ENCODE measurements at regions of chr22 and their contacts with region 1.

Region 1: DNA sequence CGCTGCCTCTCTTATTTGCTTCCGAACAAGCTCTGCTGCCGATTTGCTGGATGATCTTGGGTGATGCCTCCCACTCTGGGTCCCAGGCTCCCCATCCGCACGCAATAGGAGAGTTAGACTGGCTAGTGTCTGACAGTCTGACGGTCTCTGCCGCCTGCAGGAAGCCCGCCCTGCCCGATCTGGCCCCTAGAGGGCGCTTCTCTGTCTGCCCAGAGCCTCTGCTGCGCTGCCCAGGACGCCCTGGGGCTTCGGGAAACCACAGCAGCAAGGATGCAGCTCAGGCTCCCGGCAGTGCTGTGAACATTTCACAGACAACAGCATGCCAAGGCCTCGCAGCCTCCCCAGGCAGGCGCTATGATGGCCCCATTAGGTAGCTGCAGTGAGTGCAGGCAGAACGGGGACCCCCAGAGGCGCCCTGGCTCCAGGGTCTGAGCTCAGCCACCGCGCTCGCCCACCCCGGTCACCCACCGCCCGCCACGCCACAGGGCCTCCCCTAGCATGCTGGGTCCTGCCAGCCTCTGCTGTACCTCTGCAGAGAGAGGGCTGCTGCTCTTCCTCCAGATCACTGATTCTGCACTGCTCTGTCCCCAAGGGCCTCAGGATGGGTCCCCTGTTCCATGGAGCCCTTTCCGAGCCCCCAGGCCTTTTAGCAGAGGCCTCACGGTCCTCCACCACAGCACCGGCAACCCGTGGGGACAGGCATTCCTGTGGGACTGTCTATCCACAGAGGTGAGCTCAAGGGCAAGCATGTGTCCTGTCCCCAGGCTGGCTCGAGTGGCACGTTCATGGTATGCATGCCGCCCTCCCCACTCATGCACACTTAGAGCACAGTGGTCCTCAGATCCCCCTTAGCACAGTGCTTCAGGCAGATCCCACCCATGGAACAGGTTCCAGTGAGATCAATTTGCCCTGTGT is 4.3 kb upstream of the BAIAP2L2 start:
- DNase-seq: peak; percentile 93
- ATAC-seq: peak; percentile 93

Region 2: GRCh38 chr22:38016182-38017078 is 98.3 kb before region 1 on chr22:
- intact Hi-C with region 1: no loop called
- DNase-seq: peak; percentile 67
- ATAC-seq: peak; percentile 35

Region 3: DNA sequence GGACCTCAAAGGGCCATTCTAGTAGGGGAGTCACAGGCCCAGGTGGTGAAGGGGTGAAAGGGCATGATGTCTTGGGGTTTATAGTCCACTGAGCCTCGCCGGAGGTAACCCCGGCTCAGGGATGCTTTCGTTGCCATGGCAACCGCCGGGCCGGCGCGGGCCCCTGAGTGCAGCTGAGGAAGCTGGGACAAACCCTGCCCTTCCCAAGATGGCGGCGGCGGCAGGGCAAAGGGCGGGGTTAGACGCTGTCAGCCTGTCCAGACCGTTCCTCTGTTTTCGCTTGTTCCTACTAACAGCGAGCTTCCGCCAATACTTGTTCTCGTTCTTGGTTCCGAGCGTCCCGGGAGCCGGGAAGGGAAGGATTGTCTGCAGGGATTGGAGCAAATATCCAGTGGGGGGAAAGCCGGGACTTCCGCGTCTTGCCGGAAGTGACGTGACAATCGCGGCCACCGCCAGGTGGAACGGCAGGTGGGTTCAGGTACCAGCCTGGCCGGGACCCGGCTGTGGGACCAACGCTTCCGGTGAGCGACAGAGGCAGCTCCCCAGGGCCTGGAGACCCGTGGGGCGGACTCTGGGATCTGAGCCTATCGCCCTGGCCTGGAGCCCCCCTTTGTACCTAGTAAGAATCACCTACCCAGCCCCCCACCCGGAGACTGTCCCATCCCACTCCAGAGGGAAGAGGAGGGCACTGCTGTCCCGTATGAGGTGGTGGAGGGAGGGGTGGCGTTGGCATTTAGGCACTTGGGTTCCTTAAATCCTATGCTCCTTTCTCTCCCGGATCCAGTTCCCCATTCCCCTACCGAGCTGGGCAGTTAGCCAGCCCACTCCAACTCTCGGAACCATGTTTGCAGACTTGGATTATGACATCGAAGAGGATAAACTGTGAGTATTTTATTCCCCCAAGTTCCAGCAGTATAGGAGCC is 57.5 kb before region 1 on chr22 and contains the start of gene PICK1:
- intact Hi-C with region 1: no loop called
- DNase-seq: peak; percentile 89
- ATAC-seq: peak; percentile 90
- total RNA-seq, gene PICK1: 20.9 TPM

Region 4: GRCh38 chr22:38167988-38168431 is 53.3 kb after region 1 on chr22:
- intact Hi-C with region 1: loop called (anchors 10 kb)
- DNase-seq: peak; percentile 76
- ATAC-seq: peak; percentile 84

Region 5: DNA sequence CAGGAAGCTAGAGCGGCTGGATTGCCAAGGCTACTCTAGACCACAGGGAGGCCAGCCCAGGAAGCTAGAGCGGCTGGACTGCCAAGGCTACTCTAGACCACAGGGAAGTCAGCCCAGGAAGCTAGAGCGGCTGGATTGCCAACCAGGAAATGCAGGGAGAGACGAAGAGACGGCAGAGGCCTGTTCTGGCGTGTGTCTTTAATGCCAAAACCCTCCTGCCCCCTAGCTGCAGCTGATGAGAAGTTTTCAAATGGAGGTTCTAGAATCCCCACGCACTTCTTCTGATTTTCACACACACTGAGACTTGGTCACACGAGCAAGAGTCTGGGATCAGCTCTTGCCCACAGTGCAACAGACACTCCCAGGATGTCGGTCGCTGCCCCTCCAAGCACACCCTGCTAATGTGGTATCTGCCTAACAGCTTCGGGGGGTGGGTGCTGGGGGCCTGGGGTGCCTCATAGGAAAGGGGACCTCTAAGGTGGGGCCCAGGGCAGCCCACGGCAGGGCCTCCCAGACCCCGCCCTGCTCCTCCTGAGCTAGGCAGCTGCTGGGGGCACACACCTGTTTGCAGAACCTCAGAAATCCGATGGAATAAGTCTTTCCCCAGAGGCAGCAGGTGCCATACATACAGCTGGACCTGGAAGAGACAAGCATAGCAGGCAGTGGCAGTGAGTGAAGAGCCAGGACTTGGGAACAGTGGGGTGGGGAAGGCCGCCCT is 115.5 kb after region 1 on chr22:
- intact Hi-C with region 1: loop called (anchors 5 kb)
- DNase-seq: peak; percentile 80
- ATAC-seq: peak; percentile 55

Measured in Right ventricle myocardium inferior (tissue), 1 donor.